ENCODE measurements at regions of chr6 and their contacts with region 1.

Region 1: GRCh38 chr6:140441256-140441655 is 1066.8 kb upstream of the CITED2 start:
- DNase-seq: peak; percentile 11
- H3K4me3 ChIP-seq: no peak overlapping the region; a peak in 1 of 4 replicates
- H3K27ac ChIP-seq: peak overlapping the region; percentile 35 to 68; a peak in 3 of 4 replicates
- H3K4me1 ChIP-seq: peaks cover 2 to 34% of the 10 kb centered on the region in 2 experiments; a peak in 3 of 4 replicates
- H3K27me3 ChIP-seq: no peaks in the 10 kb centered on the region
- CTCF ChIP-seq: peak; percentile 51
- EP300 ChIP-seq: peak in 1 of 2 experiments; percentile 42; a peak in 1 of 4 replicates
- RAD21 ChIP-seq: peak; percentile 87

Region 2: DNA sequence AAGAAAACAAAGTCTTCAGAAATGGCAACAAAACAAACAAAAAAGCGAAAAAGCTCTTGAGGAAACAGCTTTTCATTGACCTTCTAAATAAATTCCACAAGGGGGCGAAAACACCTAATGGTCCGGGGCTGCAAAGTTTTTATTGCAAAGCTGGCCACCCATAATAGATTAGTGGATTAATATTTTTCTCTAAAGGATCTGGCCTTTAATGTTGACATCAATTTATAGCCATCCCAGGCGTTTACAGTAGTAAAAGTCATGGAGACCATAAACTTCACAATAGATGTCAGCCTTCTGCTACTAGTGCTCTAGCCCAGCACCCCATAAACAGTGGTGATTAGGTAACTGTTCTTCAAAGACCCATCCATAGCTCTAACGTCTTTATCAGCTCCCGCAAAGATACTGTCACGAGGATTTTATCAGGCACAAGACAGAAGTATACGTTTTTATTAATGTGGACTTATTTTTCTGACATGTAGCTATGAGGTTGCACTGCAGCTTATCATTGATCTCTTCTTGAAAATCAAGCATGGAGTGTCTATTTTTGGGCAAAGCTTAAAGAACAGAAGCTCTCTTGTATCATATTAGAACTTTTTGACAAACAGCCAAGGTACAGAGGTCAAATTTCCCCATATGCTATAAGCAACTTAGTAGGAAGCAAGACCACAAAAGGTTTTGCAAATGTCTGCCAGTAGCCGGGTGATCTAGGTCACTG is 1071.5 kb before region 1 on chr6:
- CTCF ChIA-PET with region 1: interaction called, 20 read pairs
- POLR2A ChIA-PET with region 1: no interaction called
- DNase-seq: peak; percentile 54
- H3K4me3 ChIP-seq: peak overlapping the region in 1 of 2 experiments; percentile 31; a peak in 1 of 4 replicates
- H3K27ac ChIP-seq: peak overlapping the region; percentile 76 to 91; a peak in 3 of 4 replicates
- H3K4me1 ChIP-seq: peaks cover 10 to 30% of the 10 kb centered on the region in 2 experiments
- H3K27me3 ChIP-seq: no peaks in the 10 kb centered on the region
- CTCF ChIP-seq: peak; percentile 75
- EP300 ChIP-seq: peak in 1 of 2 experiments; percentile 31; a peak in 1 of 4 replicates
- RAD21 ChIP-seq: peak; percentile 81

Region 3: DNA sequence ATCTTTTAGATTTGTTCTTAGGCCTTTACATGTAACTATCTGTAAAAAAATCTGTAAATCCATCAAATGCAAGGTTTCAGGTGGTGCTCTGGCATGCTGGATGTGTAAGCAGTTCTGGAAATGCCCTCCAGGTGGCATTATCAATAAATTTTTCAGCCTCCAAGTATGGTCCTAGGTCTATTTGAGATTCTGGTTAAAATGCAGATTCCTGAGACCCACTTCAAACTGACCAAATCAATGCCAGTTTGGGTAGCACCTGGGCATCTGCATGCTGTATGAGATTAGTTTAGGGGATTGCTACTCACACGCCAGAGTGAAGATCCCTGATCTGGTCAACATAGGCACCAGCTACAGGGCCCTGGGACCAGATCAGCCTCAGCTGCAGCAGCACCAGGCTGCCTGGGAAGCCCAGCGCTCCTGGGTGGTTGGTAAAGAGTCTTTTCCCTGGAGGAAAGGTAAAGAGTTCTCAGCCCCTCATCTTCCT is 559.5 kb before region 1 on chr6:
- CTCF ChIA-PET with region 1: interaction called, 14 read pairs
- POLR2A ChIA-PET with region 1: no interaction called
- DNase-seq: peak; percentile 51
- H3K4me3 ChIP-seq: peak overlapping the region in 1 of 2 experiments; percentile 28; a peak in 2 of 4 replicates
- H3K27ac ChIP-seq: peak overlapping the region; percentile 70 to 73; a peak in 3 of 4 replicates
- H3K4me1 ChIP-seq: peaks cover 0 to 37% of the 10 kb centered on the region in 2 experiments; a peak in 3 of 4 replicates
- H3K27me3 ChIP-seq: no peaks in the 10 kb centered on the region
- CTCF ChIP-seq: peak; percentile 59
- EP300 ChIP-seq: no peak
- RAD21 ChIP-seq: peak; percentile 75

Region 4: DNA sequence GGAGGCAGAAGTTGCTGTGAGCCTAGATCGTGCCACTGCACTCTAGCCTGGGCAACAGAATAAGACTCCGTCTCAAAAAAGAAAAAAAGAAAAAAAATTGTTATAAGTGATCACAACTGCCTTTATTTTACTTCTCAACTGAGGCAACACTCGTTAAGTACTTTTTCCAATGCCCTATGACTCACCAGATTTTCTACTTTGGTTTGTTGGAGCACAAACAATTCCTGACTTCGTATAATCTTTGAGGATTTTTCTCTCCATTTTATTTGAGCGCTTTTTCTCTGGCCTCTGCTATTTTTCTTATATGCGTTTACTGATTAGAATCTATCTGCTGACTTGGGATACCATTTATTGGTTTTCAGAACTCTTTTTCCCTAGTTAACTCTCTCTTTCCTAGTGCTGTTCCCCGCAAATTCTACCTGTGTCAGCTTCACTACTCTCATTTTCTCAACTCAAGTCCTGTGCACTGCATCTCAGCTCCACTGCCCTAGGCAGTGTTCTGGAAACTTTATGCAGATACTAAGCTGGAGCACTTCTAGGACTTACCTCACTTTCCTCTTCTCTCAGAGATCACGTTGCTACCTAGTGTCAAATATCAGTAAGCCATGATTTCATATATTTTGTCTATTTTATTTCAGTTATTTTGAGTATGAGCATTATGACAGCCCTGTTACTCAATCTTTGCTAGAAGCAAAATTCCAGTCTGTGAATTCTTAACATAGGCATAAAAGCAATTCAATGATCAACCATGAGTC is 53.2 kb after region 1 on chr6:
- CTCF ChIA-PET with region 1: no interaction called
- POLR2A ChIA-PET with region 1: no interaction called
- DNase-seq: no peak
- H3K4me3 ChIP-seq: no peak overlapping the region
- H3K27ac ChIP-seq: no peak overlapping the region; a peak in 1 of 4 replicates
- H3K4me1 ChIP-seq: peaks cover 0 to 5% of the 10 kb centered on the region in 2 experiments; a peak in 1 of 4 replicates
- H3K27me3 ChIP-seq: no peaks in the 10 kb centered on the region
- CTCF ChIP-seq: no peak
- EP300 ChIP-seq: no peak
- RAD21 ChIP-seq: no peak

Measured in SK-N-SH (cell line).